Heart right ventricle (tissue), 16 donors: ENCODE measurements at regions of chr16 and their contacts with region 1.

Region 1: DNA sequence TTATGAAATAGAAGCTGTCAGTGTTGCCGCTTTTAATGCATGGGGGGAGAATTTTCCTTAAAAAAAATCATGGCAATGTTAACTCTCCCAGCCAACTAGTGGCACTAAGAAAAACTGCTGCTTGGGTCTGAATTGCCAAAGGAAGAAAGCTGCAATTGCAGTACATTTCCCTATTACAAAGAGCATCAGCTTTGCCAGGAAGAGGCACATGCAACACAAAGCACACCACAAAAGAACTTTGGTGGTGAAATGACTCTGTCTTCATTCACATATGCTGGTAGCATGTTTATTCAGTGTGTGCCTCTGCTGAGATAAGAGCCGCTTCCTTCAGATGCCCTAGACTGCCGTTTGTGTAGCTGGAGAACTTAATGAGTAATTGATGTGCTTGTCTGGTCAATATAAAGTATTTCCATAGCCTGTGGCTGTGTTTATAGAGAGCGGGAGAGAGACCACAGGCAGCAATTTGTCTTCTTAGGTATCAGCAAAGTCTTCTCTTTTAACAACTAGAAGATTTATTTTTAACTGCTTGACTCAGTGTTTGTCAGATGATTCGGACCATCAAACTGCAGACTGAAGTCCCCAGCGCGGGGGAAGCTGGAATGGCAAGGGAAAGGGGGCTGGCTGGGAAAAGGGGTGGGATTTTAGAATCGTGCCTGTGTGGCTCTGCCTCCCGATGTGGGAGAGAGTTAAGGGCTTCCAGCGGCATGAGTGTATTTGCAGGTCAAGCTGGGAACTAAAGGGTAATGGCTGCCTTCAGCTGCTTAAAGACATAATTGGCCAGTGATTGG is 115.1 kb downstream of the MRTFB start:
- DNase-seq: peak; percentile 27 to 56
- ATAC-seq: peak; percentile 55 to 81 (median 72)
- H3K4me3 ChIP-seq: peak overlapping the region; percentile 13 to 63 (median 50)
- H3K27ac ChIP-seq: peak overlapping the region; percentile 32 to 86 (median 78)
- H3K4me1 ChIP-seq: peaks cover 4 to 77% (median 46%) of the 10 kb centered on the region in 9 donors
- H3K27me3 ChIP-seq: no peaks in the 10 kb centered on the region
- CTCF ChIP-seq: peak in 7 of 9 donors; percentile 29 to 63 (median 56)

Region 2: GRCh38 chr16:14024300-14024699 is 161.9 kb before region 1 on chr16:
- intact Hi-C with region 1: loop called in 2 of 10 experiments (anchors 10 kb)
- DNase-seq: no peak
- ATAC-seq: no peak
- H3K4me3 ChIP-seq: no peak overlapping the region
- H3K27ac ChIP-seq: no peak overlapping the region
- H3K4me1 ChIP-seq: peaks cover 0 to 9% (median 0%) of the 10 kb centered on the region in 9 donors
- H3K27me3 ChIP-seq: no peaks in the 10 kb centered on the region
- CTCF ChIP-seq: peak in 2 of 9 donors; percentile 18 to 20

Region 3: DNA sequence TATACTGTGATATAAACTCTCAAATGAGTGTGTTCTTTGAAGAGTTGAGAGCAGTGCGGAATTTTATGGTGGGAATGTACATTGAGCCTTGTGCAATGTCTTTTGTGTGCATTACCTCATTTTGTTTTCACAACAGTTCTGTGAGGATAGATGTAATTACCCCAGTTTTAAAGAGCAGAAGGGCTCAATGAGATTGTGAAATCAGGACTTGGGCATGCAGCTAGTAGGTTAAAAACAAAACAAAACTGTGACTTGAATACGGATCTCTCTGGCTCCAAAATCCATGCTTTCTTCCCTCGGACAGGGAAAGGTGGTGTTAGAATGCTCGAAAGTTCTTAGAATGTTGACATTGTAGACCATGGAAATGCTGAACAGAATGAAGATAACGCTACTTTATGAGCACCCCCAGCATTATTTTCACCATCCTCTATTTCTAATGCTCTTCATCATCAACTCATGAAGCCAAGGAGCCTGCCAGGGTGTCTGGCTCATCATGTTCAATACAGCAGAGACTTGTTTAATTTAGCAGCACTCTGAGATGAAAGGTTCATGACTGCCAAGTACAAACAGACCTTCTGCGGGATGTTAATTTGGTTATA is 97.9 kb before region 1 on chr16:
- intact Hi-C with region 1: loop called in 4 of 10 experiments (anchors 5 to 10 kb)
- DNase-seq: no peak
- ATAC-seq: peak in 5 of 8 donors; percentile 39 to 90 (median 78)
- H3K4me3 ChIP-seq: no peak overlapping the region
- H3K27ac ChIP-seq: peak overlapping the region in 3 of 10 donors; percentile 15 to 42 (median 17)
- H3K4me1 ChIP-seq: peaks cover 3 to 65% (median 44%) of the 10 kb centered on the region in 9 donors
- H3K27me3 ChIP-seq: no peaks in the 10 kb centered on the region
- CTCF ChIP-seq: no peak

Region 4: DNA sequence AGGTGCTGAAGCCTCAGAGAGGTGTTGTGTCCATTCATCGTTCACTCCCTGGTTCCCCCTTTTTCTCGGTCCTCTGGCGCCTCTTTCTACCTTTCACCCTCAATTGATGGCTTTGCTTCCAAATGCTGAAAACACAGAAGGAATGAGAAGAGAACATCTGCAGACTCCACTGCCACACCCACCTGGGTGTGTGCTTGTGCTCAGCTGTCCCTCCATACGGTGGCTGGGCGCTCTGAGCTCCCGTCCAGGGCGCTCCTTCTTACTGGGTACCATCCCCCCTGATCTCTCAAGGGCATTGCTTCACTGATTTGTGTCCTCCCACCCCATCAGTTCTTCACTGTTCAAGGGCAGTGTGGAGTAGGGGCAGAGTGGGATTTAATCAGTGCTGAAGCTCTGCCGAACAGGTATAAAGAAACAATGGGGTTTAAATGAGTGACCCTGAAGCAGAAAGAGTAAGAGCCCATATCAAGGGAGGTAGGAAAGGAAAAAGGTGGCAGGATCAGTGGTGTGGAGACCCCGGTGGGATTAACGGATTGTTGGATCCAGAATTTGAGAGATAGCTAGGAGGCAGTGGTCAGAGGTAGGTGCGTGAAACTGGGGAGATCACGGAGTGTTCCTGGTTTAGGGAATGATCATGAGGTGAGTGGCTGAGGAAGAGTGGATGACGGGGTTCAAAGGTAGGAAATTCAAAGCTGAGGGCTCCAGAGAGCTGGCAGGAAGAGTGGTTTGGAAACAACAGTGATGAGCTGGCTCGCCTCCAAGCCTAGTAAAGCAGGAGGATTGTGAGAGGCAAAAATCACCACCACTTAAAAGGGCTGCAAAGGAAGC is 74.3 kb before region 1 on chr16:
- intact Hi-C with region 1: loop called in 3 of 10 experiments (anchors 5 to 10 kb)
- DNase-seq: peak; percentile 33 to 59
- ATAC-seq: peak; percentile 18 to 59 (median 58)
- H3K4me3 ChIP-seq: no peak overlapping the region
- H3K27ac ChIP-seq: peak overlapping the region in 6 of 10 donors; percentile 4 to 63 (median 20)
- H3K4me1 ChIP-seq: peaks cover 0 to 85% (median 81%) of the 10 kb centered on the region in 9 donors
- H3K27me3 ChIP-seq: no peaks in the 10 kb centered on the region
- CTCF ChIP-seq: no peak

Region 5: GRCh38 chr16:14240219-14240843 is 54.1 kb after region 1 on chr16:
- intact Hi-C with region 1: loop called in 1 of 10 experiments (anchors 5 kb)
- DNase-seq: no peak
- ATAC-seq: peak in 6 of 8 donors; percentile 61 to 78 (median 67)
- H3K4me3 ChIP-seq: no peak overlapping the region
- H3K27ac ChIP-seq: peak overlapping the region in 7 of 10 donors; percentile 2 to 67 (median 50)
- H3K4me1 ChIP-seq: peaks cover 0 to 30% (median 24%) of the 10 kb centered on the region in 9 donors
- H3K27me3 ChIP-seq: no peaks in the 10 kb centered on the region
- CTCF ChIP-seq: no peak